ENCODE measurements at regions of chr5 and their contacts with region 1.

Region 1: DNA sequence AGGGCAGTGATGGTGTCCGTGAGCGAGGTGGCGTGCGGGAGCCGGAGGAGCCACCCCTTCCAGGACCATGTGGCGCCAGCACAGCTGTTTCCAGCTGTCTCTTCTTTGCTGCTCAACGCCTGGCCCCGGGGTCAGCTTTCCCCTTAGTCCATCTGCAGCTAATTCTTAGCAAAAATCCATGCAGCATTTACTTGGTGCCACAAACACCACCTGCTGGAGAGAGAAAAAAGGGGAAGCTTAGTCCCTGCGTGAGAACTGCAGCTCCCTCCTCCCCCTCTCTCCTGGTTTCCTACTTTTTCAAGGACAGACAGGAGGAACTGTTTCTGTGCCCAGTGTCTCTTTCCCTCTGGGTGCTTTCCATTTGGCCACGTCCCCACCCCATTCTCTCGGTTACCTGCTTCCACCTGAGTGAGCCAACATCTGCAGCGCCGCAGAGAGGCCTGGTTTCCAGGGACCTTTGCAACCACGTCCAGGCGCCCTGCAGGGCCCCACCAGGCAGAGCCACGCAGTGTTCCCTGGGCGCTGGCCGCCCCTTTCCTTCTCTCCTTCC is 3.4 kb downstream of the SLC6A19 start:
- DNase-seq: peak; percentile 6
- ATAC-seq: peak; percentile 63
- H3K4me3 ChIP-seq: no peak overlapping the region
- H3K27ac ChIP-seq: no peak overlapping the region
- H3K4me1 ChIP-seq: 0 out of 4 replicates have a peak, but pooled peaks cover 0 to 3% of the 10 kb centered on the region in 2 experiments
- H3K27me3 ChIP-seq: no peaks in the 10 kb centered on the region
- CTCF ChIP-seq: peak in 2 of 3 experiments; percentile 42 to 45; a peak in 3 of 6 replicates
- POLR2A ChIP-seq: no peak
- RAD21 ChIP-seq: peak; percentile 33; the same call in 1 of the 2 replicates

Region 2: DNA sequence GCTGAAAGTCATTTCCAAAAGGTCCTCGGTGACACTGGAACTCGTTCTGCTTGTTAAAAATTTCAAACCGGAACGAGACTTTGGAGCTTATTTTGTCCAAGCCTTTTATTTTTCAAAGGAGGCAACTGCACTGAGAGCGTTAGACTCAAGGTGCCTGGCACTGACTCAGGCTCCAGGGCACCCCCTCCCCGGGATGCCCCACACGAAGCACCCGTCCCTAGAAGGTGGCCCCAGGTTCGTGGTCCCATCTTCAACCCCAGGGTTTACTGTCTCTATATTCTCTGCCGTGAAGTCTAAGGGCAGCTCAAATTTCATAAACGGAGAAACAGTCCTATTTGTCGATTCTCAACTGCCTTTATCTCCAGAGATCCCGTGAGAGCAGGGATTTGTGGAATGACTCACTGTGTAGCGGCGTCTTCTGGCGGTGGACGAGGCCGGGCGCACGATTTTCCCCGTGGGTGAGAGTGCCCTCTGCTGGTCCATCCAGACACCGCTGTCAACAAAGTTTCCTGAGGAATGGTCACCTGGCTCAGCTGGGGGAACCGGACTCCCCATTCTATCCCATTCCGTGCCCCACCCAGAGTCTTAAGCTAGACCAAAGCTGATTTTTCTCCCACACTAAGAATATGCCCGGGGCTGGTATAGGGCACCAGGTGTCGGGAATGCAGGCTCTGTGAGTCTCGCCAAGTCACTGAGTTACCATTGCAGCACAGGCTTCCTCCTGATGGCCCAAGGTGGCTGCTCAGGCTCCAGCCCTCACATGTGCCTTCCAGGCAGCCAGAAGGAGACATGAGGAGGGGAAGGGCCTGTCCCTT is 30.4 kb before region 1 on chr5:
- CTCF ChIA-PET with region 1: interaction called, 10 read pairs
- POLR2A ChIA-PET with region 1: no interaction called
- RAD21 ChIA-PET with region 1: no interaction called
- intact Hi-C with region 1: no loop called
- DNase-seq: peak; percentile 81
- ATAC-seq: peak; percentile 86
- H3K4me3 ChIP-seq: peak overlapping the region; percentile 22 to 50
- H3K27ac ChIP-seq: peak overlapping the region; percentile 57
- H3K4me1 ChIP-seq: peaks cover 6 to 13% of the 10 kb centered on the region in 2 experiments
- H3K27me3 ChIP-seq: no peaks in the 10 kb centered on the region
- CTCF ChIP-seq: peak; percentile 83 to 90 (median 89)
- POLR2A ChIP-seq: no peak
- RAD21 ChIP-seq: peak; percentile 82

Region 3: DNA sequence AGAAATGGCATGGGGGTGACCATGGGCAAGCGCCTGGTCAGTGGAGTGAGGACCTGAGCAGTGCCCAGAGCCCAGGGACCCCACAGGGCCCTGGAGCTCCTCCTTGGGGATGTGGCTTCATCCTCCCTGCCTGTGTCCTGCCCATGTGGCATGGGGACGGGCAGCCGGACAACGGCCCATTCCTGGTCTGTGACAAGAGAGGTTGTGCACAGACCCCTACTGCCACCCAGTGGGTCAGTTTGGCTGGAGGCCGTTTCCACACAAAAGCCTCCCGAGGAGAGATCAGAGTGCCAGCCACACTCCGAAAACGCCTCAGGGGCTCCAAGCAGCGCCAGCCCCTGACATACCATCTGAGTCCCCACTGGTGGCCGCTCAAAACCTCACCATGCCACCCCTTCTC is 40.2 kb after region 1 on chr5:
- CTCF ChIA-PET with region 1: interaction called, 3 read pairs
- POLR2A ChIA-PET with region 1: no interaction called
- RAD21 ChIA-PET with region 1: no interaction called
- intact Hi-C with region 1: loop called (anchors 1 kb)
- DNase-seq: no peak
- ATAC-seq: peak; percentile 44
- H3K4me3 ChIP-seq: no peak overlapping the region
- H3K27ac ChIP-seq: no peak overlapping the region
- H3K4me1 ChIP-seq: no peaks in the 10 kb centered on the region
- H3K27me3 ChIP-seq: no peaks in the 10 kb centered on the region
- CTCF ChIP-seq: peak; percentile 9 to 31 (median 14); a peak in 1 of 6 replicates
- POLR2A ChIP-seq: no peak
- RAD21 ChIP-seq: peak; percentile 51

Region 4: DNA sequence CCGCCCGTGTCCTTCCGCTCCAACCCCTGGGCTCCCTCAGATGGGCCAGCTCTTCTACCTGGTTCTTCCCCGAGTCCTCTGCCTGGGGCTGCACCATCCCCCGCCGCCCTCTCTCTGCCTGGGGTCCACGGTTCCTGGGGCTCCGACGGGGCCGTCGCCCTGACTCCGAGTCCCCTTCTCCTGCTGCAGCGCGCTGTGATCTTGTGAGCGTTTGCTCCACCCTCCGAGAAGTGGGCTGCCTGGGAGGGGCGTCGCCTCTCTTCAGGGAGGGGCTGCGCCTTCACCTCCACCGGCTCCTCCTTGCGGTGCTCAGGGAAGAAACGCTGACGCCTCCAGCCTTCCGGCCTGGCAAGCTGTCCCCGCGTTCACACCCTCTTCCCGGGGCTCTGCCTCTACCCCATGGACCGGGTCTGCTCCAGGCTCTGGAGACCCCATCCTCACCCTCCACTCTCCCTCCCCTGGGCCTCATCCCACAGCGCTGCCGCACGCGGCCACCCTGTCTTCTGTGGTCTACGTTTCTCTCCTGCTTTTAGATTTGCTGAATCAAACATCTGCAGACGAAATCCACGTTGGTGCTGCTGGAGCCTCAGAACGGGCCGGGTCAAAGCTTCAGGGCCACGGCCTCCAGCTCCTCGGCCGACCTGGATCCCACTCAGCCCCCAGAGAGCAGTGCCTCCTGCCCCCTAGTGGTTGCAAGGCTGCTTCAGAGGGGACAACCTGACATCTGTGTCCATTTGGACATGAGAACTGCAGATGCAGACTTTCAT is 263.2 kb after region 1 on chr5:
- CTCF ChIA-PET with region 1: no interaction called
- POLR2A ChIA-PET with region 1: no interaction called
- RAD21 ChIA-PET with region 1: interaction called in 1 of 2 experiments, 3 read pairs
- intact Hi-C with region 1: loop called (anchors 2 kb)
- DNase-seq: no peak
- ATAC-seq: peak; percentile 57
- H3K4me3 ChIP-seq: no peak overlapping the region
- H3K27ac ChIP-seq: no peak overlapping the region
- H3K4me1 ChIP-seq: no peaks in the 10 kb centered on the region
- H3K27me3 ChIP-seq: no peaks in the 10 kb centered on the region
- CTCF ChIP-seq: peak; percentile 36 to 67 (median 64); a peak in 5 of 6 replicates
- POLR2A ChIP-seq: no peak
- RAD21 ChIP-seq: peak; percentile 60

Region 5: DNA sequence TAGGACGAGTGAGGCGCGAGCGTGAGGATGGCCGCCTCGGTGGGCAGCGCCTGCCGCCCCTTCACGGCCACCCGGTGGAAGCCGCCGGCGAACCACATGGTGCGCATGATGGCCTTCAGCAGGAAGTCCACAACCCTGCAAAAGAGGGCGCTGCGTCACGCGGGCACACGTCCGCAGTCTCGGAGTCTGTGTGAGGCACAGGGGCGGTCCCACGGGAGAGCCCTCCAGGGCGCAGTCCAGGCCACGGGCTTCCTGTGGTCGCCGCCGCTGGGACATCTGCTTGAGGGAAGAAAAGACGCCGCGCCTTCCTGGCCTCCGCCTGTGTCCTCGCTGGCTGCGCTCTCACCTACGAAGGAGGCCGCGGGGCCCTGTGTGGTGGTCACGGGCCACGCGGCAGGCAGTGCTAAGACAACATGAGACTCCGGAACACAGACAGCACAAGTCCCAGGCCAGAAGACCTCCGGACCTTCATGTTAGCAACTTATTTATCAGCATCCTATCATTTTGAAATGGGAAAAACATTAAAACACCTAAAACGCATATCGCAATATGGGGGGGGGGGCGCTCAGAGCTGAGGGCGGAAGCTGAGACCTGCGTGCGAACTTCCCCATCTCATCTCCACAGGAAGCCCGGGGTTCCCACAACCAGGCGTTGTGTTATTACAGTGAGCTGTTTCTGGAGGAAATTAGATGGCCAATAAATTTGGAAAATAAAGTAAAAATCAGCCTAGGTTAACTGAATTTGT is 290.2 kb after region 1 on chr5:
- CTCF ChIA-PET with region 1: no interaction called
- POLR2A ChIA-PET with region 1: no interaction called
- RAD21 ChIA-PET with region 1: no interaction called
- intact Hi-C with region 1: no loop called
- DNase-seq: no peak
- ATAC-seq: no peak
- H3K4me3 ChIP-seq: no peak overlapping the region
- H3K27ac ChIP-seq: no peak overlapping the region
- H3K4me1 ChIP-seq: no peaks in the 10 kb centered on the region
- H3K27me3 ChIP-seq: no peaks in the 10 kb centered on the region
- CTCF ChIP-seq: no peak
- POLR2A ChIP-seq: no peak
- RAD21 ChIP-seq: no peak

Measured in HCT116 (cell line).